ENCODE measurements at regions of chr17 and their contacts with region 1.

Region 1: GRCh38 chr17:47295062-47295845 is 28.5 kb upstream of the EFCAB13 start:
- DNase-seq: peak in 9 of 10 donors; percentile 30 to 82 (median 61)
- H3K4me3 ChIP-seq: no peak overlapping the region
- H3K27ac ChIP-seq: peak overlapping the region; percentile 1 to 91 (median 79)
- H3K27me3 ChIP-seq: no peaks in the 10 kb centered on the region
- CTCF ChIP-seq: no peak

Region 2: GRCh38 chr17:47253541-47254402 is 41.5 kb before region 1 on chr17 and contains the start of gene ITGB3:
- intact Hi-C with region 1: loop called in 1 of 2 experiments (anchors 5 kb)
- DNase-seq: peak in 6 of 10 donors; percentile 14 to 63 (median 48)
- H3K4me3 ChIP-seq: peak within 1 kb of the TSS; percentile 43 to 85 (median 70)
- H3K27ac ChIP-seq: peak within 1 kb of the TSS in 14 of 59 donors; percentile 4 to 73 (median 28)
- H3K27me3 ChIP-seq: peaks cover 0 to 14% (median 0%) of the 10 kb centered on the region in 45 donors
- CTCF ChIP-seq: peak in 25 of 56 donors; percentile 6 to 62 (median 24)
- total RNA-seq, gene ITGB3: 0.16 to 6.6 (median 1.6) TPM

Measured in dorsolateral prefrontal cortex (tissue), 120 donors.